HEK293 (cell line): ENCODE measurements at regions of chr7 and their contacts with region 1.

Region 1: GRCh38 chr7:130896898-130897514 is 163.0 kb upstream of the KLF14 start:
- H3K4me3 ChIP-seq: no peak overlapping the region
- H3K27ac ChIP-seq: no peak overlapping the region
- H3K4me1 ChIP-seq: peaks cover 9% of the 10 kb centered on the region
- CTCF ChIP-seq: peak; percentile 70

Region 2: GRCh38 chr7:130921391-130922180 is 24.6 kb after region 1 on chr7:
- CTCF ChIA-PET with region 1: interaction called, 13 read pairs
- POLR2A ChIA-PET with region 1: no interaction called
- H3K4me3 ChIP-seq: no peak overlapping the region
- H3K27ac ChIP-seq: no peak overlapping the region
- H3K4me1 ChIP-seq: peaks cover 8% of the 10 kb centered on the region
- CTCF ChIP-seq: no peak

Region 3: GRCh38 chr7:130982160-130982638 is 85.2 kb after region 1 on chr7:
- CTCF ChIA-PET with region 1: interaction called, 76 read pairs
- POLR2A ChIA-PET with region 1: interaction called, 4 read pairs
- H3K4me3 ChIP-seq: no peak overlapping the region
- H3K27ac ChIP-seq: no peak overlapping the region
- H3K4me1 ChIP-seq: no peaks in the 10 kb centered on the region
- CTCF ChIP-seq: no peak

Region 4: GRCh38 chr7:130996841-130997231 is 99.8 kb after region 1 on chr7:
- CTCF ChIA-PET with region 1: interaction called, 70 read pairs
- POLR2A ChIA-PET with region 1: no interaction called
- H3K4me3 ChIP-seq: no peak overlapping the region
- H3K27ac ChIP-seq: peak overlapping the region; percentile 27; the same call in 1 of the 2 replicates
- H3K4me1 ChIP-seq: peaks cover 17% of the 10 kb centered on the region
- CTCF ChIP-seq: no peak

Region 5: DNA sequence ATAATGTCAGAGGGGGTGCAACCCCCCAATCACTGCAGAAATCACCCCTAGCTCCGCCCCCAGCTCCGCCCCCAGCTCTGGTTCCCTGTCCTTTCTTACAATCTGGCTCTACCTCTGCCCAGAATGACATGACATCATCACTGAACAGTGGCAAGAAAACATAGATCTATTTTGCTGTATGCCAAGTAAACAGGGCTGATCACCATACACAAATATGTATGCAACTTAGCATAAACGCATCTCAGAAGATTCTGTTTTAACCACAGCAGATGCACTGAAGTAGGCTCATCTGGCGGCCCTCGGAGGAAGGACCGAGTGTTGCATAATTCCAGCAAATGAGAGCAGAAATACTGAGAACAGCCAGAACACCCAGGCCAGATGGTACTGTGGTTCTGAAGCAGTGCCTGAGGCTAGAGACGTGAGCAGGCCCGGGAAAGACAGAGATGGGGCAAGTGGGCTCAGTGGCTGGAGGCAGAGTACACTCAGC is 130.3 kb after region 1 on chr7:
- CTCF ChIA-PET with region 1: interaction called, 14 read pairs
- POLR2A ChIA-PET with region 1: no interaction called
- H3K4me3 ChIP-seq: no peak overlapping the region
- H3K27ac ChIP-seq: no peak overlapping the region
- H3K4me1 ChIP-seq: no peaks in the 10 kb centered on the region
- CTCF ChIP-seq: no peak

Region 6: GRCh38 chr7:131513245-131514061 is 616.4 kb after region 1 on chr7:
- CTCF ChIA-PET with region 1: interaction called, 12 read pairs
- POLR2A ChIA-PET with region 1: no interaction called
- H3K4me3 ChIP-seq: no peak overlapping the region
- H3K27ac ChIP-seq: no peak overlapping the region
- H3K4me1 ChIP-seq: no peaks in the 10 kb centered on the region
- CTCF ChIP-seq: peak; percentile 89